ENCODE measurements at regions of chr18 and their contacts with region 1.

Region 1: GRCh38 chr18:24584813-24585212 is 124.4 kb downstream of the HRH4 start:
- DNase-seq: no peak
- H3K4me3 ChIP-seq: no peak overlapping the region
- CTCF ChIP-seq: no peak

Region 2: GRCh38 chr18:24631243-24632025 is 46.6 kb after region 1 on chr18:
- in situ Hi-C with region 1: no loop called
- DNase-seq: no peak
- H3K4me3 ChIP-seq: no peak overlapping the region
- CTCF ChIP-seq: no peak

Region 3: DNA sequence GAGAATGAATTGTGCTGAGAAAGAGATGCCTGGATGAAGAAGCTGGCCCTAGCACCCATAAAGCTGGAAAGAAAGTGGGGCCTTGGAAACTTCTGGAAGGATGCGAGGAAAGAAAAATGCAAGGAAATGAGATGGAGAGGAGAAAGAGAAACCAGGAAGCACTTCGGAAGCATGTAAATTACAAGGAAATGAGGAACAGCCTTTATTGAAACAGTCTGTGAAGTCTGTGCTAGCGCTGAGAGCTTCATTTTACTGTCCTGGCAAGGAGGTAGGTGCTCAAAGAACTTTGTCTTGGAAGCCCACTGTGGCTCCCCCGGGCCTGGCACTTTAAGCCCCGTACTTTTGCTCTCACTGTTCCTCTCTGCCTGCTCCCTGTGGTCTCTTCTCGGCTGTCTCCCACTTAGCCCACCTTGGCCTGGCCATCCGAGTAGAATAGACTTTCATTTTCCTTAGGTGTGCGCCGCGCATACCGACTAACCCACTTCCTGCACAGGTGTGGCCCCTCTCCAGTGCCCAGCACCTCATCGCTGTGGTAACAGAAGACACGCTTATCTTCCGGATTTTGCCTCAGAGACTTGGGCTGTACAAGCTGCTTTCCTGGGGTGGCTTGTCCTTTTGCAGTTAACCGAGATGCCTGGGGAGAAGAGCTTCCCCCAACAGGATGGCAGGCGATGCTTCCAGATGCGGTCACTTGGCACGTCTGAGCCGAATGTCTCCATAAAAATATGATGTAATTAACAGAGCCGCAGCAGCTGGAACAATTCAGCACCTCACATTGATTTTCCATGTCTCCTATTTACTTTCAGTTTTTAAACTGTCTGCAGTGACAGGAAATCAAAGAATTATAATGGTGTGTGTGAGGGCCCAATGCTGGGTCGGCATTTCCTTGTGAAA is 75.3 kb after region 1 on chr18:
- in situ Hi-C with region 1: loop called (anchors 5 kb)
- DNase-seq: no peak
- H3K4me3 ChIP-seq: no peak overlapping the region
- CTCF ChIP-seq: no peak